Natural killer cell (primary cell): ENCODE measurements at regions of chr10 and their contacts with region 1.

Region 1: DNA sequence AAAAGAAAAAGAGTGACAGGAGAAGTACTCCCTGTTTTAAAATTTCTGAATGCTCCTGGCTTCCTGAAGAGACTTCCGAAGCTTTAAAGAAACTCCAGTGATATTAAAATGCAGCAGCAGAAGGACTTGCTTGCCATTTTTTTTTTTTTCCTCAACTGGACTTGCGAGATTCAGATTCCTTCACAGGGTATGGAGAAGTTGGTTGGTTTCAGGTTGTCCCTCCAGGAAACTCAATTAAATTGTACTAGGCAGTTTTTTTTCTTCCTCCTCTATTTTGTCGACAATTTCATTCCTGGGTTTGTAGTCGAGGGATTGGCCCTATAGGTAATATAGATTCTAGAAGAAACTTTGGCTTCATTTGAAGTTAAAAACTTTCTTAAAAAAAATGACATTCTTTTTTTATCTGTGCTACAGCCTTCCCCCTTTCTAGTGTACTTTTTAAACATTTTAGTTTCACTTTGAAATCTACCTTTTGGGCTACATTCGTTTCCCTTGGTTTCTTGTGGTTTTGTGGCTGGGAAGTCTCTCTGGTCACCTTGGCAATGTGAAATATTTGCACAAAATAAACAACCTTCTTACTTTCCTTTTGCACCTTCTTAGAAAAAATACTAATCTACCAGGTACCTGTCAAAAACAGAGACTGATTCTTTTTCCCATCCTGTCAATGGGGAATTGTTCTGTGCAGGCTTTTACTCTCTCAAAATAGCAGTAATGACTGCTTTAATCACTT is 350.1 kb downstream of the GATA3 start:
- DNase-seq: peak in 1 of 2 donors; percentile 92
- ATAC-seq: peak; percentile 55 to 81 (median 56)
- H3K4me3 ChIP-seq: peak overlapping the region; percentile 7
- H3K4me3 Mint-ChIP-seq: peak overlapping the region; percentile 84
- H3K27ac ChIP-seq: peak overlapping the region; percentile 91
- H3K27ac Mint-ChIP-seq: peak overlapping the region; percentile 81 to 88
- H3K4me1 ChIP-seq: peaks cover 45% of the 10 kb centered on the region
- H3K4me1 Mint-ChIP-seq: peaks cover 61 to 64% of the 10 kb centered on the region in 2 donors
- H3K27me3 ChIP-seq: no peaks in the 10 kb centered on the region
- H3K27me3 Mint-ChIP-seq: peaks cover 0 to 3% of the 10 kb centered on the region in 2 donors
- CTCF ChIP-seq: no peak

Region 2: GRCh38 chr10:6877722-6878392 is 1526.7 kb before region 1 on chr10:
- intact Hi-C with region 1: no loop called
- DNase-seq: no peak
- ATAC-seq: no peak
- H3K4me3 ChIP-seq: no peak overlapping the region
- H3K4me3 Mint-ChIP-seq: no peak overlapping the region
- H3K27ac ChIP-seq: no peak overlapping the region
- H3K27ac Mint-ChIP-seq: no peak overlapping the region
- H3K4me1 ChIP-seq: no peaks in the 10 kb centered on the region
- H3K4me1 Mint-ChIP-seq: no peaks in the 10 kb centered on the region
- H3K27me3 ChIP-seq: no peaks in the 10 kb centered on the region
- H3K27me3 Mint-ChIP-seq: peaks cover 2 to 7% of the 10 kb centered on the region in 2 donors
- CTCF ChIP-seq: no peak

Region 3: GRCh38 chr10:7872041-7872442 is 532.5 kb before region 1 on chr10:
- intact Hi-C with region 1: no loop called
- DNase-seq: peak in 1 of 2 donors; percentile 60
- ATAC-seq: peak in 2 of 3 donors; percentile 40 to 50
- H3K4me3 ChIP-seq: no peak overlapping the region
- H3K4me3 Mint-ChIP-seq: peak overlapping the region; percentile 73
- H3K27ac ChIP-seq: no peak overlapping the region
- H3K27ac Mint-ChIP-seq: peak overlapping the region in 1 of 2 donors; percentile 34
- H3K4me1 ChIP-seq: no peaks in the 10 kb centered on the region
- H3K4me1 Mint-ChIP-seq: peaks cover 13% of the 10 kb centered on the region in 2 donors
- H3K27me3 ChIP-seq: no peaks in the 10 kb centered on the region
- H3K27me3 Mint-ChIP-seq: no peaks in the 10 kb centered on the region
- CTCF ChIP-seq: peak; percentile 94

Region 4: GRCh38 chr10:8365935-8366911 is 38.3 kb before region 1 on chr10:
- intact Hi-C with region 1: loop called (anchors 5 kb)
- DNase-seq: peak in 1 of 2 donors; percentile 81
- ATAC-seq: peak; percentile 47 to 74 (median 69)
- H3K4me3 ChIP-seq: no peak overlapping the region
- H3K4me3 Mint-ChIP-seq: no peak overlapping the region
- H3K27ac ChIP-seq: peak overlapping the region; percentile 59
- H3K27ac Mint-ChIP-seq: peak overlapping the region in 1 of 2 donors; percentile 9
- H3K4me1 ChIP-seq: peaks cover 23% of the 10 kb centered on the region
- H3K4me1 Mint-ChIP-seq: peaks cover 37 to 46% of the 10 kb centered on the region in 2 donors
- H3K27me3 ChIP-seq: no peaks in the 10 kb centered on the region
- H3K27me3 Mint-ChIP-seq: no peaks in the 10 kb centered on the region
- CTCF ChIP-seq: no peak

Region 5: GRCh38 chr10:8416192-8416701 is 11.7 kb after region 1 on chr10:
- intact Hi-C with region 1: loop called (anchors 1 kb)
- DNase-seq: peak; percentile 35 to 83
- ATAC-seq: peak; percentile 83 to 92 (median 91)
- H3K4me3 ChIP-seq: no peak overlapping the region
- H3K4me3 Mint-ChIP-seq: peak overlapping the region; percentile 79
- H3K27ac ChIP-seq: peak overlapping the region; percentile 93
- H3K27ac Mint-ChIP-seq: peak overlapping the region; percentile 97
- H3K4me1 ChIP-seq: peaks cover 19% of the 10 kb centered on the region
- H3K4me1 Mint-ChIP-seq: peaks cover 36 to 37% of the 10 kb centered on the region in 2 donors
- H3K27me3 ChIP-seq: no peaks in the 10 kb centered on the region
- H3K27me3 Mint-ChIP-seq: peaks cover 0 to 3% of the 10 kb centered on the region in 2 donors
- CTCF ChIP-seq: no peak